ENCODE measurements at regions of chr4 and their contacts with region 1.

Region 1: DNA sequence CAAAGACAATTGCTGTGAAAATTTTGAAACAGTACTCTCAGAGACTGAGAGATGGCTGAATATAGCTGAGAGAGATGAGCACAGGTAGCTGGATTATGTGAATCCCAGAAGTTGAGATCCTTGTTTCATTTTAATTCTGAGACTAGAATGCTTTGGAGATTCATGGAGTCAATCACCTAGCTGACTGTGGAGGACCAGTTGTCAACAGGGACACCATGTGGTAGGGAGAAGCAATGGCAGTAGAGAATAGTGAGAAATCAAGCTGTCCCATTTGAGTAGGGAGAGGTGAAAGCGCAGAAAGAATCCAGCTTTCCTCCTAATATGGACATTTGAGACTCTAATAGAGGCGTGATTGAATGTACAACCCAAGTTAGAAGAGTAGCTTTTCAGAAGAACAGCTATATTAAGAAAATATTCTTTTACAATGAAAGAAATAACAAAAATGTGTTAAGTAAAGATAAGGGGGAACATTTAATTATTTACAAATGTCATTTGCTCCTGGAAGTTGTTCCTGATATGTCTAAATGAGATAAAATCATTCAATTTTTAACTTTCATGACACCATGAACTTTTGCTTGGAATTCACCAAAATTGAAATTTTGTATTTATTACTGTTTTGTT is 30.3 kb upstream of the GLRB start:
- DNase-seq: peak; percentile 58 to 72 (median 70)
- H3K4me3 ChIP-seq: no peak overlapping the region
- H3K27ac ChIP-seq: no peak overlapping the region
- H3K4me1 ChIP-seq: peaks cover 0 to 14% (median 11%) of the 10 kb centered on the region in 4 experiments
- H3K27me3 ChIP-seq: no peaks in the 10 kb centered on the region

Region 2: DNA sequence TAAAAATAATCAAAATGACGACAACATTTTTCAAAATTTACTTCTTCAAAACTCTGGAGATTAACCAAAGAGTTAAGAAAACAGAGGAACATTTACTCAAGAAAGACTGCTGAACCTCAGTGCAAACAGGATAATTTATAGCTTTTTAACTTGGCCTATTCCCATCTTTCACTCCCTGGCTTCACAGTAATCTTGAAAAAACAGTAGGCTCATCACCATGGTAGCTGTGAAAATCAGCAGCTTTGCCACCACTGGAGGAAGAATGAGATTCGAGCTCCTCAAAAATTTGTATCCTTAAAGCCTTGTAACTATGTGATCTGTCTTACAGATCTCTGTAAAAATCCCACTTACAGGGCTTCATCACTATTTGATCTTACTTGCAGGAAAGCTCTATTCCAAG is 644.2 kb before region 1 on chr4:
- CTCF ChIA-PET with region 1: no interaction called
- POLR2A ChIA-PET with region 1: no interaction called
- DNase-seq: no peak
- H3K4me3 ChIP-seq: no peak overlapping the region
- H3K27ac ChIP-seq: no peak overlapping the region
- H3K4me1 ChIP-seq: no peaks in the 10 kb centered on the region
- H3K27me3 ChIP-seq: no peaks in the 10 kb centered on the region

Region 3: DNA sequence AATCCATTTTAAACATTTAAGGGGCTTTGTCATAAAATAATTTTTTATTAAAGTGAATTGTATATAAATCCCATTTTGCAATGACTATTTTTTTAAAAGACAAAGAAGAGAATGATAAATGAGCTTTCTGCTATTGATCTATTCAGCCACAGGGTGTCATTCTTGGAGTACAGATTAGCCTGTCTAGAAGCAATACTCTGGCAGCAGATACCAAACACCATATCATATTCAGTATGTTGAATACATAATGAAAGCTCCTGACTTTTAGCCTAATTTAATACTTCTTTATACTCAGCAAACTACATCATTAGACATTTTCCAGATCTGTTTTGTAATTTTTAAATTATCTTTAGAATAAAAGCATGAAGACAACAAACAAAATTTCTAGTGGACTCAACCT is 570.3 kb before region 1 on chr4:
- CTCF ChIA-PET with region 1: interaction called, 36 read pairs
- POLR2A ChIA-PET with region 1: no interaction called
- DNase-seq: peak; percentile 52 to 71 (median 68)
- H3K4me3 ChIP-seq: no peak overlapping the region
- H3K27ac ChIP-seq: no peak overlapping the region
- H3K4me1 ChIP-seq: peaks cover 0 to 4% (median 1%) of the 10 kb centered on the region in 4 experiments
- H3K27me3 ChIP-seq: no peaks in the 10 kb centered on the region

Region 4: GRCh38 chr4:156968479-156968984 is 77.1 kb before region 1 on chr4:
- CTCF ChIA-PET with region 1: interaction called, 12 read pairs
- POLR2A ChIA-PET with region 1: no interaction called
- DNase-seq: peak; percentile 89 to 95 (median 93)
- H3K4me3 ChIP-seq: peak overlapping the region in 6 of 7 experiments; percentile 74 to 92 (median 86)
- H3K27ac ChIP-seq: no peak overlapping the region
- H3K4me1 ChIP-seq: peaks cover 25 to 60% (median 47%) of the 10 kb centered on the region in 4 experiments
- H3K27me3 ChIP-seq: no peaks in the 10 kb centered on the region

Region 5: DNA sequence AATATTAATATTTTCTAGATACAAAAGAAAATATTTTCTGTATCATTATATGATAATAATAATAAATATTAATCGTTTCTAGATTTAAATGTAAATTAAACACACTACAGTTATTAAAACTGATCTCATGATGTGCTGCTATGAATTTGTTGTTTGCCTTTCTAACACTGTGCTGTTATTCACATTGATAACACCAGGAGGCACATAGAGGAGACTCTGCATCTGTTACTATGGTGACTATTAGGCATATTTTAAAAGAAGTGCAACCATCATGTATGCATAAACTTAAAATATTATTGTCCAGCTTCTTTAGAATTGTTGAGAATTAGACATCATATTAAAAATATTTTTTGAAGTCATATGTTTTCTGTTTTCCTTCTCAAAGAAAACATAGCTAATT is 62.3 kb before region 1 on chr4:
- CTCF ChIA-PET with region 1: interaction called, 21 read pairs
- POLR2A ChIA-PET with region 1: no interaction called
- DNase-seq: peak; percentile 34 to 68 (median 63)
- H3K4me3 ChIP-seq: no peak overlapping the region
- H3K27ac ChIP-seq: no peak overlapping the region
- H3K4me1 ChIP-seq: no peaks in the 10 kb centered on the region
- H3K27me3 ChIP-seq: no peaks in the 10 kb centered on the region

Region 6: DNA sequence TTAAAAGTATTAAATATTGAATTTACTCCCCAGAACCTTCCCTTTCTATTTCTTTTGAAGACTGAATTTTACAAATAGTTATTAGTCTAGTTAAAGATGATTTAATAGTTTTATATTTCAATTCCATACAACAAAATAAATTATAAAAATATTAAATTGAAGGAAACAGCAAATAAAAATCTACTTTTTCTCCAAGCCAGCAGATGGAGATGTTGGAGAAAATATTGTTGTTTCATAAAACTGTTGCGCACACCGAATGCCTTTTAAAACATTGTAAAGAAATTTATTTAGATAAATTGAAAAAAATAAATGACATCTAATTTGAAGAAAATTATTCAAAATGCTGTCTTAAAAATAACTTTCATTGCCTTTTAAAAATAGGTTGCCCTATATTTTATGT is 180.4 kb after region 1 on chr4:
- CTCF ChIA-PET with region 1: no interaction called
- POLR2A ChIA-PET with region 1: no interaction called
- DNase-seq: no peak
- H3K4me3 ChIP-seq: no peak overlapping the region
- H3K27ac ChIP-seq: no peak overlapping the region
- H3K4me1 ChIP-seq: peaks cover 0 to 12% (median 12%) of the 10 kb centered on the region in 4 experiments
- H3K27me3 ChIP-seq: peaks cover 6 to 44% (median 19%) of the 10 kb centered on the region in 5 experiments